IMR-90 (cell line): ENCODE measurements at regions of chr6 and their contacts with region 1.

Region 1: GRCh38 chr6:117346142-117346930 is 79.4 kb downstream of the ROS1 start:
- DNase-seq: peak; percentile 28
- ATAC-seq: peak; percentile 67
- H3K4me3 ChIP-seq: no peak overlapping the region
- H3K27ac ChIP-seq: no peak overlapping the region
- H3K4me1 ChIP-seq: no peaks in the 10 kb centered on the region
- H3K27me3 ChIP-seq: no peaks in the 10 kb centered on the region; the same call in 1 of the 2 replicates
- CTCF ChIP-seq: peak; percentile 63
- POLR2A ChIP-seq: no peak
- RAD21 ChIP-seq: peak; percentile 59

Region 2: GRCh38 chr6:117555882-117556498 is 209.7 kb after region 1 on chr6:
- CTCF ChIA-PET with region 1: no interaction called
- POLR2A ChIA-PET with region 1: no interaction called
- dilution Hi-C with region 1: no loop called
- in situ Hi-C with region 1: no loop called
- intact Hi-C with region 1: loop called (anchors 5 kb)
- DNase-seq: peak; percentile 31
- ATAC-seq: peak; percentile 59
- H3K4me3 ChIP-seq: no peak overlapping the region
- H3K27ac ChIP-seq: no peak overlapping the region
- H3K4me1 ChIP-seq: peaks cover 2% of the 10 kb centered on the region; the same call in 1 of the 2 replicates
- H3K27me3 ChIP-seq: no peaks in the 10 kb centered on the region
- CTCF ChIP-seq: peak; percentile 82
- POLR2A ChIP-seq: no peak
- RAD21 ChIP-seq: peak; percentile 75

Region 3: GRCh38 chr6:117829594-117830319 is 483.4 kb after region 1 on chr6:
- CTCF ChIA-PET with region 1: no interaction called
- POLR2A ChIA-PET with region 1: no interaction called
- dilution Hi-C with region 1: no loop called
- in situ Hi-C with region 1: no loop called
- intact Hi-C with region 1: loop called (anchors 2 kb)
- DNase-seq: peak; percentile 30
- ATAC-seq: peak; percentile 57
- H3K4me3 ChIP-seq: peak overlapping the region; percentile 48
- H3K27ac ChIP-seq: no peak overlapping the region
- H3K4me1 ChIP-seq: no peaks in the 10 kb centered on the region
- H3K27me3 ChIP-seq: no peaks in the 10 kb centered on the region
- CTCF ChIP-seq: peak; percentile 56
- POLR2A ChIP-seq: no peak
- RAD21 ChIP-seq: peak; percentile 61

Region 4: DNA sequence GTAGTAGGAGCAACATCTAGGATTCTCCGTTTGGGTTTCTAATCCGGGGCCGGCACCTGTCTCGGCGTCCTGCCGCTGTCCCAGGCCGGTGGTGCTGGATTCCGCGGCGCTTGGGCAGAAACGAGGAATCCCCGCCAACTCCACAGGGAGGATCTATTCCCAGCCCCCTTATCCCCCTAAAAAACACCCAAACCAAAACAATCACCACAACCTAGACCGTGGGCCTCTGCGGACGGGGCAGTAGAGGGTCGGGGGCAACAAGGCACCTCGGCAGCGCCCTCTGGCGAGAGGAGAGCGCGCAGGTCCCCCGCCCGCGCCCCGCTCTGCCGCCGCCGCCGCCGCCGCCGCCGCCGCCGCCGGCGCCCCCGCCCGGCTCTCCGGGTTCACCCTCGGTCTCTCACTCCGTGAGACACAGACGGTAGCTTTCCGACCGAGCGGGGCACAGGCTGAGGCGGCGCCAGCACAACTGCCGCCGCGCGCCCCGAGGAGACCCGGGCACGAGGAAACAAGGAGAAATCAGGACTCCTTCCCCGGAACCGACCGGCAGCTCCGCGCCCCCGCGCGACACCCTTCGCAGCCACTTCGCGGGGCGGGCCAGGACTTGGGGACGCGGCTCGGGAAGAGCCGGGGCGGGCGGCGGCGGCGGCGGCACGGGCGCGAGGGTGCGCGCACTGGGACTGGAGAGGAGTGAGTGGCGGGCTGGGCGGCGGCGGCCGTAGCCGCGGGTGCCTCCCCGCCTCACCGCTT is 560.7 kb after region 1 on chr6 and contains the start of gene SLC35F1:
- CTCF ChIA-PET with region 1: no interaction called
- POLR2A ChIA-PET with region 1: no interaction called
- dilution Hi-C with region 1: no loop called
- in situ Hi-C with region 1: no loop called
- intact Hi-C with region 1: loop called (anchors 5 kb)
- DNase-seq: peak; percentile 1
- ATAC-seq: peak; percentile 71
- H3K4me3 ChIP-seq: peak within 1 kb of the TSS; percentile 25
- H3K27ac ChIP-seq: no peak within 1 kb of the TSS
- H3K4me1 ChIP-seq: no peaks in the 10 kb centered on the region
- H3K27me3 ChIP-seq: peaks cover 18% of the 10 kb centered on the region
- CTCF ChIP-seq: 0 out of 2 replicates have a peak, but pooled peaks have one; percentile 22
- POLR2A ChIP-seq: no peak
- RAD21 ChIP-seq: no peak
- total RNA-seq, gene SLC35F1: not detected in 2 replicates

Region 5: DNA sequence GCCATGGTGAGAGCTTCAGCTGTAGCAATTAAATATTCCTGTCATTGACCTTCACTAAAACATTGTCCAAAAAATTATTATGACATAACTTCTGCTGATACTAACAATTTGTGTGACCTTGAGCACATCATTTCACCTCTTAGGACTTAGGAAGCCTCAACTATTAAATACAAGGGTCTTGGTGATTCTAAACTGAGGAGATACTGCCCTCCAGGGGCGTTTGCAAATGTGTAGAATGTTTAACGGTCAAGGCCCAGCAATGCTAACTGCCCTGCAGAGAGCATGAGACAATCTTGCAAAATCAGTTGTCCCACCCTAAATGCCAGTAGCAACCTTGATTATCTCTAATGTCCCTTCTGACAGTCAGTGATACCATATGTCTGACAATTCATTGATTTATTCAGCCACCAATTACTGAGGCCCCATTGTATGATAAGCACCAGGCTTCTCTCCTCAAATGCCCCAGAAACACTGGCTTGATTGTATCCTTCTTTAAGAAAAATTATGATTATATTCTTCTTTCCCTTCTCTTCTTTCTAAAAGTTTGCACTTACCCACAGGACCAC is 917.7 kb after region 1 on chr6:
- CTCF ChIA-PET with region 1: no interaction called
- POLR2A ChIA-PET with region 1: no interaction called
- dilution Hi-C with region 1: no loop called
- in situ Hi-C with region 1: no loop called
- intact Hi-C with region 1: loop called (anchors 5 kb)
- DNase-seq: peak; percentile 1
- ATAC-seq: no peak
- H3K4me3 ChIP-seq: no peak overlapping the region
- H3K27ac ChIP-seq: no peak overlapping the region
- H3K4me1 ChIP-seq: no peaks in the 10 kb centered on the region
- H3K27me3 ChIP-seq: peaks cover 2% of the 10 kb centered on the region
- CTCF ChIP-seq: 0 out of 2 replicates have a peak, but pooled peaks have one; percentile 18
- POLR2A ChIP-seq: no peak
- RAD21 ChIP-seq: peak; percentile 26; the same call in 1 of the 2 replicates